ENCODE measurements at regions of chr2 and their contacts with region 1.

Region 1: DNA sequence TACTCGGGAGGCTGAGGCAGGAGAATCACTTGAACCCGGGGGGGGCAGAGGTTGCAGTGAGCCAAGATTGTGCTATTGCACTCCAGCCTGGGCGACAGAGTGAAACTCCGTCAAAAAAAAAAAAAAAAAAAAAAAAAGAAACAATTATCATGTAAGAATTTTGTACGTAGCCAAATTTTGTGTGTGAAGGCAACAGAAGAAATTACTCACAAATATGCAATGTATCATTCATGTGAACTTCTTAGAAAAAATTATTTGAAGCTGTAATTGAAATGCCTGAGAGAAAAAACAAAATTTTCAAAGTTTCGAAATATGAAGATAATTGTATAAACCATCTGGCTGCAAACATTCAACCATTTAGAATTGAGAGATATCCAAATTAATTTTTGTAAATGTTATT is 204.8 kb upstream of the PARD3B start:
- DNase-seq: no peak
- H3K4me3 Mint-ChIP-seq: no peak overlapping the region
- H3K27ac Mint-ChIP-seq: no peak overlapping the region
- H3K4me1 Mint-ChIP-seq: peaks cover 57% of the 10 kb centered on the region
- H3K27me3 Mint-ChIP-seq: no peaks in the 10 kb centered on the region
- CTCF ChIP-seq: no peak

Region 2: GRCh38 chr2:204353823-204354222 is 13.3 kb after region 1 on chr2:
- CTCF ChIA-PET with region 1: no interaction called
- intact Hi-C with region 1: no loop called
- DNase-seq: no peak
- H3K4me3 Mint-ChIP-seq: no peak overlapping the region
- H3K27ac Mint-ChIP-seq: no peak overlapping the region
- H3K4me1 Mint-ChIP-seq: no peaks in the 10 kb centered on the region
- H3K27me3 Mint-ChIP-seq: no peaks in the 10 kb centered on the region
- CTCF ChIP-seq: no peak

Region 3: GRCh38 chr2:204611017-204611631 is 270.6 kb after region 1 on chr2:
- CTCF ChIA-PET with region 1: no interaction called
- intact Hi-C with region 1: loop called (anchors 10 kb)
- DNase-seq: no peak
- H3K4me3 Mint-ChIP-seq: no peak overlapping the region
- H3K27ac Mint-ChIP-seq: no peak overlapping the region
- H3K4me1 Mint-ChIP-seq: peaks cover 33% of the 10 kb centered on the region
- H3K27me3 Mint-ChIP-seq: no peaks in the 10 kb centered on the region
- CTCF ChIP-seq: no peak